ENCODE measurements at regions of chr13 and their contacts with region 1.

Region 1: GRCh38 chr13:76903544-76904162 is 17.4 kb upstream of the KCTD12 start:
- DNase-seq: peak; percentile 37 to 82
- ATAC-seq: peak; percentile 84 to 97 (median 91)
- H3K4me3 ChIP-seq: no peak overlapping the region
- H3K4me3 Mint-ChIP-seq: no peak overlapping the region
- H3K27ac ChIP-seq: no peak overlapping the region
- H3K27ac Mint-ChIP-seq: no peak overlapping the region
- H3K4me1 ChIP-seq: no peaks in the 10 kb centered on the region
- H3K4me1 Mint-ChIP-seq: no peaks in the 10 kb centered on the region
- H3K27me3 ChIP-seq: peaks cover 19% of the 10 kb centered on the region
- H3K27me3 Mint-ChIP-seq: peaks cover 32 to 75% of the 10 kb centered on the region in 2 donors
- CTCF ChIP-seq: peak; percentile 99

Region 2: DNA sequence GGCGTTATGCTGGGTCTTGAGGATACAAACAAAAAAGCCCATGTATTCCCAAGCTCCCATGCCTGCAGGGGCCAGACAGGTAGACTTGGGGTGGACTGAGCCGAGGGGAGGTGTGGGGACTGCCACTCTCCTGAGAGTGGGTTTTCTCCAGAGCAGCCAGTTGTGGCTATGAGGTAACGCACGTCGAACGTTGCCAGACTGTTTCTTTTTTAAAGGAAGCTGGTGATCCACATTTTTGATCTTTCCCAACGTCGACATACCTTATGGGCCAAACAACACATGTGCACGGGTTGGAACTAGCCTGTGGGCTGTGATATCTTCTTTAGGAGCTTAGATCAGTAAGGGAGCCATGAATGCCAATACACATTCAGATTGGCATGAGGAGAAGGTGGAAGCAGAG is 1206.9 kb before region 1 on chr13:
- intact Hi-C with region 1: loop called (anchors 1 kb)
- DNase-seq: no peak
- ATAC-seq: no peak
- H3K4me3 ChIP-seq: no peak overlapping the region
- H3K4me3 Mint-ChIP-seq: no peak overlapping the region
- H3K27ac ChIP-seq: no peak overlapping the region
- H3K27ac Mint-ChIP-seq: no peak overlapping the region
- H3K4me1 ChIP-seq: no peaks in the 10 kb centered on the region
- H3K4me1 Mint-ChIP-seq: no peaks in the 10 kb centered on the region
- H3K27me3 ChIP-seq: no peaks in the 10 kb centered on the region
- H3K27me3 Mint-ChIP-seq: no peaks in the 10 kb centered on the region
- CTCF ChIP-seq: no peak

Region 3: DNA sequence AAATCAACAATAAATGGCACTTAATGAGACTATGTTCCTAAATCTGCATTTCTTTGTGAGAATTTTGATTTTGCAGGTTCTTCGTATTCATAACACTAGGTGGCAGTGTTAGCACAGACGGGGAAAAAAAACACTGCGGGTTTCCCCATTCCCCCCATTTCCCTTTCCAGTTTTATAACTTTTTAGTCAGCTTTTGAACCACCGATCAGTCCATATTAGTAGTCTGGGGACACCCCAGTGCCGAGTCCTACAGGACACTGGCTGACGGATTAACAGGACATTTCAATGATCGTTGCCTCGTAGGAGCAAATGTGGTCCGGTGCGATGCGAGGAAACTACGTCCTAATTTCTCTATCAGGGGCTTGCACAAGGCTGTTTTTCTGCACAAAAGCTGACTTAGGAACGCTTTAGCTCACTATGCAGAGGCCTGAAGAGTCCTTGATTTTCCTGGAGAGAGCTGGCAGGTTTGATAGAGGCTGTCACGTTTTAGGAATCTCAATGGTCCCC is 1033.2 kb before region 1 on chr13:
- intact Hi-C with region 1: loop called (anchors 1 kb)
- DNase-seq: peak in 1 of 2 donors; percentile 61
- ATAC-seq: peak; percentile 45 to 60 (median 59)
- H3K4me3 ChIP-seq: no peak overlapping the region
- H3K4me3 Mint-ChIP-seq: peak overlapping the region; percentile 65
- H3K27ac ChIP-seq: no peak overlapping the region
- H3K27ac Mint-ChIP-seq: peak overlapping the region; percentile 21 to 63
- H3K4me1 ChIP-seq: peaks cover 7% of the 10 kb centered on the region
- H3K4me1 Mint-ChIP-seq: peaks cover 7 to 12% of the 10 kb centered on the region in 2 donors
- H3K27me3 ChIP-seq: no peaks in the 10 kb centered on the region
- H3K27me3 Mint-ChIP-seq: peaks cover 5 to 8% of the 10 kb centered on the region in 2 donors
- CTCF ChIP-seq: peak; percentile 81

Region 4: GRCh38 chr13:76473552-76474134 is 430.0 kb before region 1 on chr13:
- intact Hi-C with region 1: loop called (anchors 5 kb)
- DNase-seq: peak; percentile 34 to 85
- ATAC-seq: peak; percentile 81 to 91 (median 84)
- H3K4me3 ChIP-seq: no peak overlapping the region
- H3K4me3 Mint-ChIP-seq: no peak overlapping the region
- H3K27ac ChIP-seq: no peak overlapping the region
- H3K27ac Mint-ChIP-seq: no peak overlapping the region
- H3K4me1 ChIP-seq: no peaks in the 10 kb centered on the region
- H3K4me1 Mint-ChIP-seq: no peaks in the 10 kb centered on the region
- H3K27me3 ChIP-seq: no peaks in the 10 kb centered on the region
- H3K27me3 Mint-ChIP-seq: no peaks in the 10 kb centered on the region
- CTCF ChIP-seq: peak; percentile 79

Region 5: DNA sequence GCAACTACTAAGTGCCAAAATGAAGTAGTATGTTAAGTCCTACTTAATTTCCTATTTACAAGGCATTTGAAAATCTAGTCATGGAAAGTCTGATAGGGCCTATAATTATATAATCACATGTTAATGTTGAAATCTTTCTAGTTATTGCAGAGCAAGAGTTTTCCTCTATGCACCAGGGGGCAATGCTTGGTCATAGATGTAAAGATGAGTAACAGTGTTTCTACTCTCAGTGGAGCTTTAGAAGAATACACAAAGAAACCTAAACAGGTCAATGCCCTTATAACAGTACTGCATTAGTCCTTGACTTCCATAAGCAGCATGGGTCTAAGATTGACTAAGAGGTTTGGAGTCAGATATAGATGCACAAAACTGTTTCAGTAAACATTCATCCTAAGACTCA is 236.1 kb before region 1 on chr13:
- intact Hi-C with region 1: loop called (anchors 5 kb)
- DNase-seq: peak in 1 of 2 donors; percentile 48
- ATAC-seq: no peak
- H3K4me3 ChIP-seq: no peak overlapping the region
- H3K4me3 Mint-ChIP-seq: no peak overlapping the region
- H3K27ac ChIP-seq: no peak overlapping the region
- H3K27ac Mint-ChIP-seq: no peak overlapping the region
- H3K4me1 ChIP-seq: no peaks in the 10 kb centered on the region
- H3K4me1 Mint-ChIP-seq: no peaks in the 10 kb centered on the region
- H3K27me3 ChIP-seq: no peaks in the 10 kb centered on the region
- H3K27me3 Mint-ChIP-seq: no peaks in the 10 kb centered on the region
- CTCF ChIP-seq: no peak